Natural killer cell (primary cell): ENCODE measurements at regions of chr5 and their contacts with region 1.

Region 1: DNA sequence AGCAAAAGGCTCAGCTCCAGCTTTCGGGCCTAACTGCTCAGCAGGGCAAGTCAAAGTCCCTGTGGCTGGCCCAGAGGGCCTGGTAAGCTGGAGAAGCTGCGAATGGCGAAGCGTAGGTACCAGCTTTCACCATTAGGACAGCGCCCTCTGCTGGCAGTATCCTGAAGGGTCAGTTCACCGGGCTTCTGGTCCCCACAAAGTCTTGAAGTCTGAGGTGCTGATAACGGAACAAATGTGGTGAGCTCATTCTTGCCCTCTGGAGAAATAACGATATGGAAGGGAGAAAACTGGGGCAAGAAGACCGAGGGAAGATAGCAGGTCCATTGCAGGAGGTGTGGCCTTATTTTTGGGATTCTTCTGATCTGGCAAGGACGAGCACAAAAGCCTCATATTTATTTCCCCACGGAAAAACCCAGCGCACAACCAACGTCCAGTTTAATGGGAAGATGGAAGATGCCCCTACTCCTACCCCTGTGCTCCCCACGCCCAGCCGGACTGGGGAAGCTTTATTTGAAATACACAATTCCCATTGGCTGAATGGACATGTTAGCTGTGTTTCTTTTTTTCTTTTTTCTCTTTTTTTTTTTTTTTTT is 7.2 kb downstream of the SOWAHA start:
- DNase-seq: peak; percentile 81 to 93
- ATAC-seq: peak; percentile 90 to 98 (median 96)
- H3K4me3 ChIP-seq: no peak overlapping the region
- H3K4me3 Mint-ChIP-seq: no peak overlapping the region
- H3K27ac ChIP-seq: no peak overlapping the region
- H3K27ac Mint-ChIP-seq: peak overlapping the region in 1 of 2 donors; percentile 33
- H3K4me1 ChIP-seq: peaks cover 11% of the 10 kb centered on the region
- H3K4me1 Mint-ChIP-seq: peaks cover 10 to 11% of the 10 kb centered on the region in 2 donors
- H3K27me3 ChIP-seq: peaks cover 35% of the 10 kb centered on the region
- H3K27me3 Mint-ChIP-seq: peaks cover 45 to 52% of the 10 kb centered on the region in 2 donors
- CTCF ChIP-seq: peak; percentile 81

Region 2: DNA sequence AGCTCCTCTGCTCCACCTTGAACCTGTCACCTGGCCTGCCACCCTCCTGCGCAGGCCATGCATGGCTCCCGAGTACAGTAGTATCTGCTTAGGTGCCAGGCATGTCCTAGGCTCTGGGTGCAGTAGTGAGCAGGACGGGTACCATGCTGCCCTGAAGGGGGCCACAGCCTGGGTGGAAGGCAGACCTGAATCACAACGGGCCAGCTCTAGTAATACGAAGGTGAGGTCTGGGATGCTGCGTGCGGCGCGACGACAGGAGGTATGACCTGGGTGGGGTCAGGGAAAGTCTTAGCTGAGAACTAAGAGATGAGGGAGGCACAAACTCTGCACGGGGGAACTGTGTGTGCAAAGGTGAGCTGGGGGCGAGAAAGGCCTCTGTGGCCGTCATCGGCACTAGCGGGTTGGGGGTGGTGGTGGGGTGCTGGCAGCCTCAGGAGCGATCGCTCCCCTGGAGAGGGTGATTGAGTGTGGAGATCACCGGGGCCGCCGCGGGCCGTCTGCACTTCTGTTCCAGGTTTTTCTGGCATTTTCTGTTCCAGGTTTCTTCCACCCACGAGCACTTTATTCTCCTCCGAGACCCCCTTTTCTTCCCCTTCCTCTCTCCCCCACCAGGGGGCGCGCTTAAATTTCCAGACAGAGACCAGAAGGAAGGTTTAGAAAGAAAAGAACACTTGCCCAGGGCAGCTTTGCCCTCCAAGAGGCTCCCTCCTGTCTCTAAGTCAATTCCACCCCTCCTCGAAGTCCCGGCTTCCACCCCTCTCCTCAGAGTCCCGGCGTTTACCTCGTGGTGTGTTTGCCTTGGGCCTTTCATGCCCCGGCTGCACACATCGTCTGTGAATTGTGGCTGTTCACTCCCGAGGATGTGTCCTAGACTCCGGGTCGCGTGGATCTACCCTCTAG is 547.7 kb before region 1 on chr5:
- intact Hi-C with region 1: loop called (anchors 2 kb)
- DNase-seq: peak; percentile 52 to 72
- ATAC-seq: peak in 2 of 3 donors; percentile 55 to 59
- H3K4me3 ChIP-seq: no peak overlapping the region
- H3K4me3 Mint-ChIP-seq: peak overlapping the region; percentile 56
- H3K27ac ChIP-seq: no peak overlapping the region
- H3K27ac Mint-ChIP-seq: no peak overlapping the region
- H3K4me1 ChIP-seq: peaks cover 8% of the 10 kb centered on the region
- H3K4me1 Mint-ChIP-seq: peaks cover 0 to 18% of the 10 kb centered on the region in 2 donors
- H3K27me3 ChIP-seq: peaks cover 4% of the 10 kb centered on the region
- H3K27me3 Mint-ChIP-seq: peaks cover 15 to 23% of the 10 kb centered on the region in 2 donors
- CTCF ChIP-seq: peak; percentile 70

Region 3: DNA sequence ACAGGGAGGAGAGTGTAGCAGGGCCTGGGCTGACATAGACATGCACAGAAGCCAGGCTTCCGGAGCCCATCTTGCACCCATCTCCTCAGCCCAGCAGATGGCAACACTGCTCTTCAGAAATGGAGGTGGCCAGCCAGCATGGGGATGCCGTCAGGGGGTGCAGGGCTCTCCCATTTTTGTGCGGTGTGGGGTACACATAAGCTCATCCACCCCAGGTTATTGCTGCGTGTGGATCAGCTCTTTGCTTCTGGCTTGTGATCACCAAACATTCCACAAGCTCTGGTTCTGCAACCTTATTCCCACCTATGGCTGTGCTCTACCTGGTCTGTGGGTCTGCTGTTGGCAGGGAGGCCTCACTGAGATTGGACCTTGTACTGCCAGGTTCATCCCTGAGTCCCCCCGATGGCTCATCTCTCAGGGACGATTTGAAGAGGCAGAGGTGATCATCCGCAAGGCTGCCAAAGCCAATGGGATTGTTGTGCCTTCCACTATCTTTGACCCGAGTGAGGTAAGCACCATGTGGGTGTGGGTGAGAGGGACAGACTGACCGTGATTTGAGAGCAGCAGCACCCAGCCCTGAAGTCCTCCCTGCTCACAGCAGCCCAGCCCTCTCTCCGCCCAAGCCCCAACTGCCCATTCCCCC is 433.5 kb before region 1 on chr5:
- intact Hi-C with region 1: loop called (anchors 1 kb)
- DNase-seq: peak; percentile 72 to 91
- ATAC-seq: peak; percentile 90 to 94 (median 91)
- H3K4me3 ChIP-seq: no peak overlapping the region
- H3K4me3 Mint-ChIP-seq: no peak overlapping the region
- H3K27ac ChIP-seq: no peak overlapping the region
- H3K27ac Mint-ChIP-seq: peak overlapping the region; percentile 37 to 81
- H3K4me1 ChIP-seq: peaks cover 26% of the 10 kb centered on the region
- H3K4me1 Mint-ChIP-seq: peaks cover 15 to 35% of the 10 kb centered on the region in 2 donors
- H3K27me3 ChIP-seq: no peaks in the 10 kb centered on the region
- H3K27me3 Mint-ChIP-seq: no peaks in the 10 kb centered on the region
- CTCF ChIP-seq: peak; percentile 85

Region 4: GRCh38 chr5:132500931-132501630 is 319.2 kb before region 1 on chr5:
- intact Hi-C with region 1: loop called (anchors 5 kb)
- DNase-seq: peak; percentile 68 to 92
- ATAC-seq: peak; percentile 47 to 62 (median 61)
- H3K4me3 ChIP-seq: no peak overlapping the region
- H3K4me3 Mint-ChIP-seq: no peak overlapping the region
- H3K27ac ChIP-seq: peak overlapping the region; percentile 53
- H3K27ac Mint-ChIP-seq: peak overlapping the region; percentile 95 to 100
- H3K4me1 ChIP-seq: peaks cover 50% of the 10 kb centered on the region
- H3K4me1 Mint-ChIP-seq: peaks cover 35 to 50% of the 10 kb centered on the region in 2 donors
- H3K27me3 ChIP-seq: no peaks in the 10 kb centered on the region
- H3K27me3 Mint-ChIP-seq: no peaks in the 10 kb centered on the region
- CTCF ChIP-seq: peak; percentile 84

Region 5: GRCh38 chr5:132526290-132526973 is 293.8 kb before region 1 on chr5:
- intact Hi-C with region 1: loop called (anchors 5 kb)
- DNase-seq: peak; percentile 29 to 73
- ATAC-seq: peak; percentile 76 to 85 (median 85)
- H3K4me3 ChIP-seq: no peak overlapping the region
- H3K4me3 Mint-ChIP-seq: no peak overlapping the region
- H3K27ac ChIP-seq: no peak overlapping the region
- H3K27ac Mint-ChIP-seq: no peak overlapping the region
- H3K4me1 ChIP-seq: peaks cover 17% of the 10 kb centered on the region
- H3K4me1 Mint-ChIP-seq: peaks cover 6 to 24% of the 10 kb centered on the region in 2 donors
- H3K27me3 ChIP-seq: no peaks in the 10 kb centered on the region
- H3K27me3 Mint-ChIP-seq: no peaks in the 10 kb centered on the region
- CTCF ChIP-seq: peak; percentile 97

Region 6: DNA sequence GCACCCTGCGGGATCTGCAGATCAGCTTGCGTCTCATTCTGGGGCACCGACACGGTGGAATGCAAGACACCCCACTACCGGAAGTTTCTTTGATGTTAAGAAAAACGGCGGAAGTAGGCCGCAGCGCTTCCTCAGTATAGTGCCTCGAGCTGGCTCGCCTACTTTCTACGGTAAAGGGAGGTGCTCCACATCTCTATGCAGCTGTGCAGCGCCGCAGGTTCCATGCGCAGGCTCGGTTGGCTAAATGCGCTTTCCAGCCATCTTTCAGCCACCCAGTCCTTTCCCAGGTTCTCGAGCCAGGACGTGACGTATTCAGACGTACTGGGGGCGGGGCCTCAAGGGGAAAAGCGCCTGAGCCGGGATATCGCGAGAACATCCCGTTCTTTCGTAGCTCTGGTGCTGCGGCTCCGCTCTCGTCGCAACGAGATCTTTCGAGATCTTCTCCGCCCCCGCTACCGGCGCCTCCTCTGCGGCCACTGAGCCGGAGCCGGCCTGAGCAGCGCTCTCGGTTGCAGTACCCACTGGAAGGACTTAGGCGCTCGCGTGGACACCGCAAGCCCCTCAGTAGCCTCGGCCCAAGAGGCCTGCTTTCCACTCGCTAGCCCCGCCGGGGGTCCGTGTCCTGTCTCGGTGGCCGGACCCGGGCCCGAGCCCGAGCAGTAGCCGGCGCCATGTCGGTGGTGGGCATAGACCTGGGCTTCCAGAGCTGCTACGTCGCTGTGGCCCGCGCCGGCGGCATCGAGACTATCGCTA is 231.5 kb after region 1 on chr5 and contains the start of gene HSPA4:
- intact Hi-C with region 1: no loop called
- DNase-seq: peak; percentile 96 to 100
- ATAC-seq: peak; percentile 84 to 91 (median 87)
- H3K4me3 ChIP-seq: peak within 1 kb of the TSS; percentile 91
- H3K4me3 Mint-ChIP-seq: peak within 1 kb of the TSS; percentile 91
- H3K27ac ChIP-seq: peak within 1 kb of the TSS; percentile 87
- H3K27ac Mint-ChIP-seq: peak within 1 kb of the TSS; percentile 98 to 99
- H3K4me1 ChIP-seq: peaks cover 25% of the 10 kb centered on the region
- H3K4me1 Mint-ChIP-seq: peaks cover 23 to 41% of the 10 kb centered on the region in 2 donors
- H3K27me3 ChIP-seq: no peaks in the 10 kb centered on the region
- H3K27me3 Mint-ChIP-seq: peaks cover 0 to 4% of the 10 kb centered on the region in 2 donors
- CTCF ChIP-seq: no peak
- total RNA-seq, gene HSPA4: 38.3 to 58.6 (median 43.0) TPM